ACHN (cell line): ENCODE measurements at regions of chr12 and their contacts with region 1.

Region 1: DNA sequence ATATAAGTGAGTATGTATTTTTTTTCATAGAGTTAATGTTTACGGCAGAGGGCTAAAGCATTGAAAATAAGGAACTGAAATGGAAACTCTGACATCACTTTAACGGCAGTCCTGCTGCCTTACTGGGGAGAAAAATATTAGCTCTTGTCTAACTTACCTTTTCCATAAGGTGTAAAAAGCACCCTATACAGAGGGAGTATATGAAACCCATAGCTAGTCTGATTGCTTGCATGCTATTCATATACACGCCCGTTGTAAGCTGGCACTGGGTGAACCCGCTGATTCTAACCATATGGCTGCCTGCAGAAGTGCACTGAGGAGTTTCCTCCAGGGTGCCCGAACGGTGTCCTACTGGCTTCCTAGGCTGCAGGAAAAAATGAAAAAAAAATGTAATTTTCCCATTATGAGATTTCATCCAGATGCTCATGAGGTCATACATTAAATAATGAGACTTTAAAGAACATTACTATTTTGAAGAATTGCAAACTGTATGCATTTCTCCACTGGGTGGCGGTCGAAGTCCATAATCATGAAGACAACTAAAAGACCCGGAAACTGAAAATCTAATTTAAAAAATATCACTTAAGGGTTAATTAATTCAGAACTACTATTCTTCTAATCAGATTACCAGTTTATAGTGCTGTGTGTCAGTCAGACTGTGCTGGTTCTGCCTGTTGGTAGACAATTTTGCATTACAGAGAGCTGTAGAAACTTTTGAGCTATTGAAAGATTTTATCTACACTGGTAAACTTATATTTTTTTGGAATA is 144.7 kb downstream of the ALX1 start:
- DNase-seq: peak; percentile 56

Region 2: DNA sequence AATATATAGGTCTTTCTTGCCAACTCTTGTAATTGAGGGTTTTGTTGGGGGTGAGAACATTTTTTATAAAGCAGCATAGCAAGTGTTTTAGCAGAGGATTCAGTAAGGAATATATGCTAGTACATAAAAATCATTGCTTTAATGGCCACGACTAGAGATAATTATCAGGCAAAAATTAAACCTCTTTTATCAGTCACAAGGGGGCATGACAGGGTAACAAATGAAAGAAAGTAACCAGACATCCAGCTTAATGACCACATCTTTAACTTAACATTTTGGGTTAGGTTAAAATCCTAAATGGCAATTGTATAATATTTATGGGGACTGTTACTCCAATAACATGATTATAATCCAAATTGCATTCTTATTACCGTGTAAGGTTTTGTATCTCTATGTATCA is 269.0 kb before region 1 on chr12:
- in situ Hi-C with region 1: loop called (anchors 25 kb)
- DNase-seq: peak; percentile 73

Region 3: DNA sequence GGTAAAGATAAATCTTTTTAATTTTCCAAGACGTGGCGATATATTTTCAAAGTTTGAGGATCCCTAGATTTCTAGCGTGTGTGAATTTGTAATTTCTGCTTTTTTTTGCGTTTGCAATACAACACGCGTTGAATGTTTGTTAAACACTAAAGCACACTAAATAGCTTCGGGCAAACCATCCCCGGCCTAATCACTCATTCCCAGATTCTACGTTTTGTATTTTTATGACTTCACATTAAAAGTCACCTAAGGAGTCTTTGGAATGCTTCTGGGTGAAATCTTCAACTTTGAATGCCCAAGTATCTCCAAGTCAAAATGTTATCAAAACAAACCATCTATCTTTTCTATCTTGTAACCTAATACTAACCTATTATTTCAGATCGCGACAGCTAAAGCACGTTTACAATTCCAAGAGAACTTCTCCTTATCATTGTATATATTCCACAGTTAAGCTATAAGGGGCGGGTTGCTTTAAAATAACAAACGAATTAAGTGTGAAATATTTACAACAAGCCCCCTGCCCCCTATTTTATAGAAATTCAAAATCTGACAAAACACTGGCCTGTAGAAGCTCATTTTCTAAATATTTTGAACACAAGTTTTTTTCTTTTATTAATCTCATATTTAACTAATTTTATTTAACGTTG is 143.7 kb before region 1 on chr12:
- in situ Hi-C with region 1: no loop called
- DNase-seq: peak; percentile 7

Region 4: DNA sequence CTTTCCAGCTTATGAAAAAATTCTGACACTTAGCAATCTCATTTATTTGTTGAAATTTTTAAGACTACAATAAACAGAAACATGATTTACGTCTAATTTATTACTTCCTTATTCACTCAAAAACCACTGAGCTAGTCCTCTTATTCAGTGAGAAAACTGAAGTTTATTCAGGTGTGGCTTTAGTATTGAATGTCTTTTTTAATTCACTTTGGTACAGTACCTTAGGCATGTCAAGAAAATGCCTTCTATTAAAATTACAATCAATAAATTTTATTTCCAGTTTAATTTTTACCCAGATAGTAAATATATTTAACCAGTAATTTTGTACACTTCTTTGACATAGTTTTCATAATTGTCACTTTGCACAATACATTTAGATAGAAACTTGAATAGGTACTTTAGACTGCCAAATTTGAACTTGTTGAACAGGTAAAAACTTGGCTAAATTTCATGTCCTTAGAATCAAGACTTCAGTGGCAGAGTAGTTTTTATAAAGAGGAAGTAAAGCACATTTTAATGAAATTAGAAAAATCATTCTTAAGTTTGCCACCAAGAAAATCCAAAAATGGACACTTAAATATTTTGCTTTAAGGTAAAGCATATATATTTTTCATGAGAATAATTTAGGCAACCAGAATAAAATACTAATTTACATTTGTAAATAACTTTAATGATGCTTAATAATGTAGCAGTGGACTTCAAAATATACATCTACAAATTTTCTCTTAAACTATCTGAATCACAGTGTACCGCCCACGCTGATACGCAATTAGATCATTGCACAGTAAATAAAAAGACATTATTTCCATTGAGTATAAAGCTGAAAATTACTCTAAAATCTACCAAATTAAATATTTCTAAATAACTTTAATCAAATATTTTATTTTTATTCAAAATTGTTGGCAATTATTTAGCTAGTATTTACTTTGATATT is 252.3 kb after region 1 on chr12:
- in situ Hi-C with region 1: no loop called
- DNase-seq: no peak